PC-9 (cell line): ENCODE measurements at regions of chr1 and their contacts with region 1.

Region 1: GRCh38 chr1:74652597-74653139 is 20.9 kb downstream of the ERICH3 start:
- DNase-seq: peak; percentile 67 to 98
- H3K4me3 ChIP-seq: peak overlapping the region; percentile 3; the same call in 1 of the 2 replicates
- H3K27ac ChIP-seq: peak overlapping the region; percentile 76
- H3K4me1 ChIP-seq: peaks cover 23% of the 10 kb centered on the region
- H3K27me3 ChIP-seq: no peaks in the 10 kb centered on the region
- CTCF ChIP-seq: no peak

Region 2: GRCh38 chr1:74485622-74486021 is 167.0 kb before region 1 on chr1:
- CTCF ChIA-PET with region 1: no interaction called
- POLR2A ChIA-PET with region 1: no interaction called
- intact Hi-C with region 1: no loop called
- DNase-seq: no peak
- H3K4me3 ChIP-seq: no peak overlapping the region
- H3K27ac ChIP-seq: no peak overlapping the region
- H3K4me1 ChIP-seq: no peaks in the 10 kb centered on the region
- H3K27me3 ChIP-seq: no peaks in the 10 kb centered on the region
- CTCF ChIP-seq: no peak

Region 3: GRCh38 chr1:74513411-74514300 is 139.0 kb before region 1 on chr1:
- CTCF ChIA-PET with region 1: no interaction called
- POLR2A ChIA-PET with region 1: interaction called, 10 read pairs
- intact Hi-C with region 1: no loop called
- DNase-seq: no peak
- H3K4me3 ChIP-seq: no peak overlapping the region
- H3K27ac ChIP-seq: no peak overlapping the region
- H3K4me1 ChIP-seq: no peaks in the 10 kb centered on the region
- H3K27me3 ChIP-seq: no peaks in the 10 kb centered on the region
- CTCF ChIP-seq: no peak

Region 4: GRCh38 chr1:74613894-74614293 is 38.8 kb before region 1 on chr1:
- CTCF ChIA-PET with region 1: no interaction called
- POLR2A ChIA-PET with region 1: no interaction called
- intact Hi-C with region 1: no loop called
- DNase-seq: no peak
- H3K4me3 ChIP-seq: no peak overlapping the region
- H3K27ac ChIP-seq: no peak overlapping the region
- H3K4me1 ChIP-seq: no peaks in the 10 kb centered on the region
- H3K27me3 ChIP-seq: no peaks in the 10 kb centered on the region
- CTCF ChIP-seq: no peak

Region 5: GRCh38 chr1:74689621-74690363 is 37.1 kb after region 1 on chr1:
- CTCF ChIA-PET with region 1: no interaction called
- POLR2A ChIA-PET with region 1: no interaction called
- intact Hi-C with region 1: loop called (anchors 2 kb)
- DNase-seq: peak; percentile 43 to 67
- H3K4me3 ChIP-seq: no peak overlapping the region
- H3K27ac ChIP-seq: no peak overlapping the region
- H3K4me1 ChIP-seq: peaks cover 12% of the 10 kb centered on the region
- H3K27me3 ChIP-seq: no peaks in the 10 kb centered on the region
- CTCF ChIP-seq: peak; percentile 95

Region 6: DNA sequence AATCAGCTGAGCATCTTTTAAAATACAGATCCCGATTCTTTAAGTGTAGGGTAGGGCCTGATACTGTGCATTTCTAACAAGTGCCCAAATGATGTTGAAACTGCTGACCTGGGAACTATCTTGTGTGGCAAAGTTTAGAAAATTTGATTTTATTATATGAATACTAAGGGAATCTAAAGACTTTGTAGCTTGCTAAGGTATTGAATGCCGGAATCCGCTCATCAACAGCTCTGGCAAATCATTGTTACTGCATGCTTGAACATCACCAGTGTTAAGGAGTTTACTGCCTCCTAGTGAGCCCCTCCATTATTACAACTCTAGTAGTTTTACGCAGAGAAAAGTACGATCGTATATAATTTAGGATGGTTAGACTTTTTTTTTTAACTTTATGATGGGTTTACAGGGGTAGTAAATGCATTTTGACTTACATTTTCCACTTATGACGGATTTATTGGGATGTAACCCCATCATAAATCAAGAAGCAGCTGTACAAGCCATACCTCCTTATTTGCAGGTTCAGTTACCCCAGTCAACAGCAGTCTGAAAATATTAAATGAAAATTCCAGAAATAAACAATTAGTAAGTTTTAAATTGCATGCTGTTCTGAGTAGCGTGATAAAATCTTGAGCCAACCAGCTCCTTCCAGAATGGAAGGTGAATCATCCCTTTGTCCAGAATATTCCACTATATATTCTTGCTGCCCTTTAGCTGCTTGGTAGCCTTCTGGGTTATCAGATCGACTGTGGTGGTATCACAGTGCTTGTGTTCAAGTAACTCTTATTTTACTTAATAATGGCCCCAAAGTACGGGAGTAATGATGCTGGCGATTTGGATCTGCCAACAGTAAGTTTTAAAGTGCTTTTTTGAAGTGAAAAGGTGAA is 81.2 kb after region 1 on chr1:
- CTCF ChIA-PET with region 1: no interaction called
- POLR2A ChIA-PET with region 1: no interaction called
- intact Hi-C with region 1: loop called (anchors 2 kb)
- DNase-seq: peak; percentile 26 to 79
- H3K4me3 ChIP-seq: peak overlapping the region; percentile 95
- H3K27ac ChIP-seq: peak overlapping the region; percentile 84
- H3K4me1 ChIP-seq: peaks cover 25% of the 10 kb centered on the region
- H3K27me3 ChIP-seq: no peaks in the 10 kb centered on the region
- CTCF ChIP-seq: peak; percentile 89